HEK293 (cell line): ENCODE measurements at regions of chr15 and their contacts with region 1.

Region 1: GRCh38 chr15:85504749-85505676 is 124.6 kb downstream of the AKAP13 start:
- H3K4me3 ChIP-seq: no peak overlapping the region
- H3K27ac ChIP-seq: no peak overlapping the region
- H3K4me1 ChIP-seq: peaks cover 3% of the 10 kb centered on the region; the same call in 1 of the 2 replicates
- CTCF ChIP-seq: no peak

Region 2: GRCh38 chr15:85296615-85297402 is 208.2 kb before region 1 on chr15:
- CTCF ChIA-PET with region 1: interaction called, 46 read pairs
- POLR2A ChIA-PET with region 1: no interaction called
- H3K4me3 ChIP-seq: no peak overlapping the region; the same call in 1 of the 2 replicates
- H3K27ac ChIP-seq: no peak overlapping the region
- H3K4me1 ChIP-seq: no peaks in the 10 kb centered on the region; the same call in 1 of the 2 replicates
- CTCF ChIP-seq: peak; percentile 73; the same call in 1 of the 2 replicates

Region 3: DNA sequence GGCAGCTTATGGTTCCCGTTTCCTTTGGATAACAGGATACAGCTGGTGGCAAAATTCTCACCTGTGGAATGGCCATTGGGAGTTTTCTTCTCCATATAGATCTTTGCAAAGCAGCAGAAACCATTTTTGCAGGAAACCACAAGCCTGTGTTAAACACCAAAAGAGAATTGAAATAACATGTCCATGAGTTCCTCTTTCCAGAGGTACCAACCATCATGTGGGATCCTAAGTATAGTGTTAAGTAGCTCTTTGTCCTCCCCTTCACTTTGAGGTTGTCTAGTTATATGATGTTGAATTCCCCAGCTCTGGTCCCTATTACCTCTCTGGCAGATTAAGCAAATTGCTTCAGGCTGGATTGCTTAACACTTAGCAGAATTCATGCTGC is 29.7 kb before region 1 on chr15:
- CTCF ChIA-PET with region 1: interaction called, 13 read pairs
- POLR2A ChIA-PET with region 1: no interaction called
- H3K4me3 ChIP-seq: no peak overlapping the region
- H3K27ac ChIP-seq: no peak overlapping the region
- H3K4me1 ChIP-seq: peaks cover 32% of the 10 kb centered on the region
- CTCF ChIP-seq: no peak

Region 4: DNA sequence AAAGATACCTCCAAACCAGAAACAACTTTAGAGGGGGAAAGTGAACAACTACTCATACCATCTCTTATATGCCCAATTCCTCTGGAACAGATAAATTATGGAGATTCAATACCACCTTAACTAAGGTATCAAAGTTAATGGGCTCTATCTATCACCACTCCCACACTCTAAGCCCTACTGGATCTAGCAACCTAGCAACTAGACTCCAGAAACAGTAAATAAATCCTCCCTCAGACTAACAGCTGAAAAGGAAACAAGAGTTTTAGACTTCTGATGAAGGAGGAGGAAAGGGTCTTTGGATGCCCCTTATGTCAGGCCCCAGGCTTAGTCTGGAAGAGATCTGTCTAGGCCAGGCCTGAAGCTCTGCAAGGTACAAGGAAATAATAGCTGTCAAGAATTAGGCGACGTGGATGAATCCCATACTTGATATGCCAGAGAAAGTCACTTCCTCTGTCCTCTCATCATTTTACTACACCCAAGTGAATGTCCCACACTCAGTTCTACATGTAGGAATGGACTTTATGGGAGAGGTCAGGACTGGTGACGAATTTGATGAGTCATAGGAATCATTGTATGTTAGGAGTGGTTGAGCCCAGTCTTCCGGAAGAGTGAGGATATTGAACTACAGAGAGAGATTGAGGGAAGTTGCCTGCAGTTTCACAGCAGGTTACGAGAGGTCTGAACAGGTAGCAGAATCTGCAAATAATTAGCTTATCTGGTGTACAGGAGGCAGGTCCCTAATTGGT is 10.8 kb before region 1 on chr15:
- CTCF ChIA-PET with region 1: interaction called, 44 read pairs
- POLR2A ChIA-PET with region 1: no interaction called
- H3K4me3 ChIP-seq: no peak overlapping the region
- H3K27ac ChIP-seq: peak overlapping the region; percentile 48; the same call in 1 of the 2 replicates
- H3K4me1 ChIP-seq: peaks cover 49% of the 10 kb centered on the region
- CTCF ChIP-seq: no peak

Region 5: GRCh38 chr15:85520650-85521049 is 15.6 kb after region 1 on chr15:
- CTCF ChIA-PET with region 1: interaction called, 13 read pairs
- POLR2A ChIA-PET with region 1: no interaction called
- H3K4me3 ChIP-seq: no peak overlapping the region
- H3K27ac ChIP-seq: no peak overlapping the region
- H3K4me1 ChIP-seq: peaks cover 10% of the 10 kb centered on the region; the same call in 1 of the 2 replicates
- CTCF ChIP-seq: no peak